Naive thymus-derived CD4-positive, alpha-beta T cell (primary cell): ENCODE measurements at regions of chr3 and their contacts with region 1.

Region 1: GRCh38 chr3:189324538-189325138 is 152.9 kb downstream of the TPRG1 start:
- DNase-seq: peak; percentile 15 to 96 (median 94)
- ATAC-seq: peak; percentile 98
- H3K4me3 ChIP-seq: peak overlapping the region; percentile 21
- H3K4me3 Mint-ChIP-seq: peak overlapping the region; percentile 72 to 87 (median 82)
- H3K27ac ChIP-seq: peak overlapping the region; percentile 51
- H3K27ac Mint-ChIP-seq: peak overlapping the region; percentile 86 to 100 (median 94)
- H3K4me1 ChIP-seq: peaks cover 33 to 46% of the 10 kb centered on the region in 2 donors
- H3K4me1 Mint-ChIP-seq: peaks cover 27 to 80% (median 73%) of the 10 kb centered on the region in 7 donors
- H3K27me3 ChIP-seq: no peaks in the 10 kb centered on the region
- H3K27me3 Mint-ChIP-seq: peaks cover 0 to 4% (median 0%) of the 10 kb centered on the region in 5 donors

Region 2: DNA sequence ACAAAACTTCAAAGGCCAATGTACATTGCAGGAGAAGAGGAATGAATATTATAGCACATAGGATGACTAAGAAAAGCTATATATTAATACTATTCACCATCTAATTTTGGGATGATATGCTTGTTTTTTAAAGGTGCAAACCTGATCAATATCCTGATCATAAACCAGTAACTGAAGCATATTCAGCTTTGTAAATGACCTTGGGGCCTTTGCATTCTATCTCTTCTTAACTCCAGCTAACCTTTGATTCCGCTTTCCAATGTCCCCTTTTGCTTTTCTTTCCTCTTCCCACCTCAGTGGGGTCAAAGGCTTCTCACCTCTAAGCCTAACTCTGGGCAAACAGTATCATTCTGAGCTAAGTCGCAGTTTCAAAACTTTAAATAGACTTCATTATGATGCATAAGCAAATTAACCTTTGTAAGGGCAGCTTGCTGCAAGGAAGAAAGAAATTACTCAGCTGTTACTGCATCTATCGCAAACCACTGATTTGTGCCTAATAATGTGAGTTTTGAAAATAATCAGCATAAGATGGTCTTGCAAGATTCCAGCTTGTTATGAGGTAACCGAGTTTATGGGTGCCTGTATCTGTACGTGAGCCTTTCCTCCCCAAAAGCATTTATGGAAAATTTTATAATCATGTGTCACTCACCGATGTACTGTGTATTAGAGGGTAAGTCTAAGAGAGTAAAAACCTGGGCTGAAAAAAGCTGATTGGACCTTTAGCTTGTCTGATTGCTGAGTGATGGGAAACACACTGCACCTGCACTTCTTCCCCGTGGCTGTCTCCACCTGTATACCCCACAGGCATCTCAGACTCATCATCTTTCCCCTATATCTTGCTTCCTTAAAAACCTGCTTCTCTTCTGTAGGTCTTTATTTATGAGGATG is 36.0 kb before region 1 on chr3:
- CTCF ChIA-PET with region 1: no interaction called
- POLR2A ChIA-PET with region 1: interaction called, 7 read pairs
- intact Hi-C with region 1: loop called (anchors 1 to 5 kb)
- DNase-seq: no peak
- ATAC-seq: no peak
- H3K4me3 ChIP-seq: no peak overlapping the region
- H3K4me3 Mint-ChIP-seq: peak overlapping the region in 5 of 10 donors; percentile 0 to 19 (median 12)
- H3K27ac ChIP-seq: no peak overlapping the region
- H3K27ac Mint-ChIP-seq: peak overlapping the region in 7 of 9 donors; percentile 3 to 53 (median 14)
- H3K4me1 ChIP-seq: peaks cover 6 to 22% of the 10 kb centered on the region in 2 donors
- H3K4me1 Mint-ChIP-seq: peaks cover 14 to 46% (median 36%) of the 10 kb centered on the region in 7 donors
- H3K27me3 ChIP-seq: no peaks in the 10 kb centered on the region
- H3K27me3 Mint-ChIP-seq: no peaks in the 10 kb centered on the region

Region 3: GRCh38 chr3:189304446-189305351 is 19.9 kb before region 1 on chr3:
- CTCF ChIA-PET with region 1: interaction called, 6 read pairs
- POLR2A ChIA-PET with region 1: interaction called, 6 read pairs
- intact Hi-C with region 1: loop called (anchors 1 kb)
- DNase-seq: peak in 5 of 9 donors; percentile 16 to 42 (median 28)
- ATAC-seq: no peak
- H3K4me3 ChIP-seq: no peak overlapping the region
- H3K4me3 Mint-ChIP-seq: peak overlapping the region; percentile 27 to 77 (median 64)
- H3K27ac ChIP-seq: no peak overlapping the region
- H3K27ac Mint-ChIP-seq: peak overlapping the region; percentile 44 to 93 (median 86)
- H3K4me1 ChIP-seq: peaks cover 0 to 19% of the 10 kb centered on the region in 2 donors
- H3K4me1 Mint-ChIP-seq: peaks cover 15 to 68% (median 57%) of the 10 kb centered on the region in 7 donors
- H3K27me3 ChIP-seq: no peaks in the 10 kb centered on the region
- H3K27me3 Mint-ChIP-seq: no peaks in the 10 kb centered on the region

Region 4: DNA sequence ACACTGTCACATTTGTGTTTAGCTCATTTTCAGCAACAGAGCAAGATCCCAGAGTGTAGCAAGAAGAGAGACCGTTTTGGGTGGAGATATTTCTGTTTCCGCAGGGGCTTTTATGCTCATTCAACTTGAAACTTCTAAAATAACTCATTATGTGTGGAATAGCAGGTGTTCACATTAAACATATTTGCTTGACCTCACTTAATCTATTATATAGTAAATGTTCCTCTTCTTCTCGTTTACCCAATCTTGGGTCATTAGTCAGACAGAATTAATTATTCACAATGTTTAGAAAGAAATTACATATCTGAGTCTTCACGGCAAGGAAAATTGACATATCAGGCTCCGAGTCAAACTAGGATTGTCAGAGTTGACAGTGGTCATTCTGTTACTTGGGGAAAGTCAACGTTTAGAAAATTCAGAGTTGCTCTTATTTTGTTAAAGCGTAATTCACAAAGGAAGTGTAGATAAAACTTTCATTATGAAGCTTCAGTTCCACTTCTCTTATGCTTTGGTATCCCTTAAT is 70.0 kb after region 1 on chr3:
- CTCF ChIA-PET with region 1: no interaction called
- POLR2A ChIA-PET with region 1: interaction called, 3 read pairs
- intact Hi-C with region 1: loop called (anchors 2 kb)
- DNase-seq: no peak
- ATAC-seq: no peak
- H3K4me3 ChIP-seq: no peak overlapping the region
- H3K4me3 Mint-ChIP-seq: peak overlapping the region in 1 of 10 donors; percentile 31
- H3K27ac ChIP-seq: no peak overlapping the region
- H3K27ac Mint-ChIP-seq: peak overlapping the region in 1 of 9 donors; percentile 62
- H3K4me1 ChIP-seq: no peaks in the 10 kb centered on the region
- H3K4me1 Mint-ChIP-seq: peaks cover 0 to 25% (median 0%) of the 10 kb centered on the region in 7 donors
- H3K27me3 ChIP-seq: no peaks in the 10 kb centered on the region
- H3K27me3 Mint-ChIP-seq: peaks cover 0 to 3% (median 0%) of the 10 kb centered on the region in 5 donors

Region 5: DNA sequence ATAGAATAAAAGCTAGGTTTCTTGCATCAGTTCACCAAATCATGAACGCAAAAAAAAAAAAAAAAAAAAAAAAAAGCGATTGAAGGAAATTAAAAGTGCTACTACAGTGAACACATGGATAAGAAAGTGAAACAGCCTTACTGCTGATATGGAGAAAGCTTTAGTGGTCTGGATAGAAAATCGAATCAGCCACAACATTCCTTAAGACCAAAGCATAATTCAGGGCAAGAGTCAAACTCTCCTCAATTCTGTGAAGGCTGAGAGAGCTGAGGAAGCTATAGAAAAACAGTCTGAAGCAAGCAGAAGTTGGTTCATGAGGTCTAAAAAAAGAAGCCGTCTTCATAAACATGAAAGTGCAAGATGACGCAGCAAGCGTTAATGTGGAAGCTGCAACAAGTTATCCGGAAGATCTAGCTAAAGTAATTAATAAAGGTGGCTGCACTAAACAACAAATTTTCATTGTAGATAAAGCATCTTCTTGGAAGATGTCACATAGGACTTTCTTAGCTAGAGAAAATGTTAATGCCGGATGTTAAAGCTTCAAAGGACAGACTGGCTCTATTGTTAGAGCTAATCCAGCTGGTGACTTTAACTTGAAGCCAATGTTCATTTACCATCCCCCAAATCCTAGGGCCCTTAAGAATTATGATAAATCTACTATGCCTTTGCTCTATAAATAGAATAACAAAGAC is 776.8 kb after region 1 on chr3:
- CTCF ChIA-PET with region 1: no interaction called
- POLR2A ChIA-PET with region 1: no interaction called
- intact Hi-C with region 1: no loop called
- DNase-seq: no peak
- ATAC-seq: peak; percentile 20
- H3K4me3 ChIP-seq: no peak overlapping the region
- H3K4me3 Mint-ChIP-seq: peak overlapping the region in 8 of 10 donors; percentile 4 to 72 (median 32)
- H3K27ac ChIP-seq: no peak overlapping the region
- H3K27ac Mint-ChIP-seq: no peak overlapping the region
- H3K4me1 ChIP-seq: no peaks in the 10 kb centered on the region
- H3K4me1 Mint-ChIP-seq: peaks cover 6 to 7% (median 6%) of the 10 kb centered on the region in 7 donors
- H3K27me3 ChIP-seq: no peaks in the 10 kb centered on the region
- H3K27me3 Mint-ChIP-seq: peaks cover 7 to 30% (median 14%) of the 10 kb centered on the region in 5 donors

Region 6: GRCh38 chr3:190617185-190617584 is 1292.5 kb after region 1 on chr3:
- CTCF ChIA-PET with region 1: no interaction called
- POLR2A ChIA-PET with region 1: no interaction called
- intact Hi-C with region 1: loop called in 1 of 2 experiments (anchors 10 kb)
- DNase-seq: peak in 1 of 9 donors; percentile 43
- ATAC-seq: peak; percentile 86
- H3K4me3 ChIP-seq: no peak overlapping the region
- H3K4me3 Mint-ChIP-seq: peak overlapping the region in 1 of 10 donors; percentile 78
- H3K27ac ChIP-seq: no peak overlapping the region
- H3K27ac Mint-ChIP-seq: peak overlapping the region in 1 of 9 donors; percentile 94
- H3K4me1 ChIP-seq: peaks cover 0 to 4% of the 10 kb centered on the region in 2 donors
- H3K4me1 Mint-ChIP-seq: peaks cover 26 to 81% (median 31%) of the 10 kb centered on the region in 7 donors
- H3K27me3 ChIP-seq: no peaks in the 10 kb centered on the region
- H3K27me3 Mint-ChIP-seq: no peaks in the 10 kb centered on the region

Region 7: GRCh38 chr3:191051037-191051436 is 1726.4 kb after region 1 on chr3:
- CTCF ChIA-PET with region 1: no interaction called
- POLR2A ChIA-PET with region 1: no interaction called
- intact Hi-C with region 1: no loop called
- DNase-seq: no peak
- ATAC-seq: no peak
- H3K4me3 ChIP-seq: no peak overlapping the region
- H3K4me3 Mint-ChIP-seq: no peak overlapping the region
- H3K27ac ChIP-seq: no peak overlapping the region
- H3K27ac Mint-ChIP-seq: no peak overlapping the region
- H3K4me1 ChIP-seq: no peaks in the 10 kb centered on the region
- H3K4me1 Mint-ChIP-seq: no peaks in the 10 kb centered on the region
- H3K27me3 ChIP-seq: no peaks in the 10 kb centered on the region
- H3K27me3 Mint-ChIP-seq: no peaks in the 10 kb centered on the region